ENCODE measurements at regions of chr4 and their contacts with region 1.

Region 1: DNA sequence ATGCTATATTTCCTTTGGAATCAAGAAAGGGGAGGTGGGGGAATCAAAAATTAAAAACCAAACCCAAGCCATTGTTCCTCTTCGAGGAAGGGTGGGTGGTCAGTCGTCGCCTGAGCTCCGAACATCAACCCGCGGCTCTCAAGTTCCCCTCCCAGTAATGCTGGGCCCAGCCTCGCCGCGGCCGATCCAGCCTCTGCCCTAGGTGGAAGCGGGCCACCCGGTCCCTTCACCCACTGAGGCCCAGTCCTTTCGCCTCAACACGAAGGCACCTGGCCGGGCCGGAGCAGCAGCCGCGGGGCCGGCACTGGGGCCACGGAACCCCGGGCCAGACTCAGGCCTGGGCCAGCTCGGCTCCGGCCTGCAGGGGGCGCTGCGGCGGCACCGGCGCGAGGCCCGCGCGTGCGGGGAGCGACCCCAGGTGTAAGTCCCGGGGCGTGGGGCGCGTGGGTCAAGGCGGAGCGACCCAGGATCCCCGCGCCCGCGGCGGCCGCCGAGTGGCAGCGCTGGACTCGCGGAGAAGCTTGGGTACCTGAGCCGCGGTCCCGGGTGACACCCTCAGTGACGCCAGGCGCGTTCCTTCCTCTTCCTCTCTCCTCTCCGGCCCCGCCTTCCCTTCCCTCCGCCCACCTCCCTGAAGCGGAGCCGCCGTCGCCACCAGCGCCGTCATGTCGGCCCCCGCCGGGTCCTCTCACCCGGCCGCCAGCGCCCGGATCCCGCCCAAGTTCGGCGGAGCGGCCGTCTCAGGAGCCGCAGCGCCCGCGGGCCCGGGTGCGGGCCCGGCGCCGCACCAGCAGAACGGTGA is at the start of gene SEC24B:
- DNase-seq: peak; percentile 91 to 98
- H3K4me3 ChIP-seq: peak within 1 kb of the TSS; percentile 70
- CTCF ChIP-seq: no peak
- POLR2A ChIP-seq: no peak
- total RNA-seq, gene SEC24B: 26.0 to 45.2 (median 37.3) TPM

Region 2: DNA sequence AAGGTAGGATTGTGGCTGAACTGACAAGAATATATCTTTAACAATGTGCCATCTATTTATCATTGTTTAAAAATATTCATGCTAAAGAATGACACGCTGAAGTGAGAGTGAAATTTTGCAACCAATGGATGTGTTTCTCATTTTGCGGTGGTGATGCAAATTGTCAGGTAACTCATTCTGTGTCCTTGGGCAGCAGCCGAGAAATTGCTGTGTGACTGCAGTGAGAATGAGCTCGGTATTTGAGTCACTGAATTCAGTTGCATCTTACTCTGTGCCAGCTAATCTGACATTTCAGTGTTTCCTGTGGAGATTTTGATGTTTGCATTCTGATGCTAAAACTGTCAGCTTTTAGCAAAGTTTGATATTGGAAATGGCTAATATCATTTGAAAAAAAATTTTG is 154.8 kb after region 1 on chr4:
- intact Hi-C with region 1: no loop called
- DNase-seq: no peak
- H3K4me3 ChIP-seq: no peak overlapping the region
- CTCF ChIP-seq: no peak
- POLR2A ChIP-seq: no peak

Region 3: GRCh38 chr4:109815151-109816081 is 382.0 kb after region 1 on chr4 and contains the start of gene GAR1:
- intact Hi-C with region 1: loop called (anchors 10 kb)
- DNase-seq: peak; percentile 91 to 97
- H3K4me3 ChIP-seq: peak within 1 kb of the TSS; percentile 63
- CTCF ChIP-seq: no peak
- POLR2A ChIP-seq: no peak
- total RNA-seq, gene GAR1: 2.2 to 15.6 (median 7.8) TPM

Region 4: GRCh38 chr4:109977854-109978501 is 544.6 kb after region 1 on chr4:
- intact Hi-C with region 1: loop called (anchors 5 kb)
- DNase-seq: no peak
- H3K4me3 ChIP-seq: no peak overlapping the region
- CTCF ChIP-seq: no peak
- POLR2A ChIP-seq: no peak